Calu3 (cell line): ENCODE measurements at regions of chr2 and their contacts with region 1.

Region 1: DNA sequence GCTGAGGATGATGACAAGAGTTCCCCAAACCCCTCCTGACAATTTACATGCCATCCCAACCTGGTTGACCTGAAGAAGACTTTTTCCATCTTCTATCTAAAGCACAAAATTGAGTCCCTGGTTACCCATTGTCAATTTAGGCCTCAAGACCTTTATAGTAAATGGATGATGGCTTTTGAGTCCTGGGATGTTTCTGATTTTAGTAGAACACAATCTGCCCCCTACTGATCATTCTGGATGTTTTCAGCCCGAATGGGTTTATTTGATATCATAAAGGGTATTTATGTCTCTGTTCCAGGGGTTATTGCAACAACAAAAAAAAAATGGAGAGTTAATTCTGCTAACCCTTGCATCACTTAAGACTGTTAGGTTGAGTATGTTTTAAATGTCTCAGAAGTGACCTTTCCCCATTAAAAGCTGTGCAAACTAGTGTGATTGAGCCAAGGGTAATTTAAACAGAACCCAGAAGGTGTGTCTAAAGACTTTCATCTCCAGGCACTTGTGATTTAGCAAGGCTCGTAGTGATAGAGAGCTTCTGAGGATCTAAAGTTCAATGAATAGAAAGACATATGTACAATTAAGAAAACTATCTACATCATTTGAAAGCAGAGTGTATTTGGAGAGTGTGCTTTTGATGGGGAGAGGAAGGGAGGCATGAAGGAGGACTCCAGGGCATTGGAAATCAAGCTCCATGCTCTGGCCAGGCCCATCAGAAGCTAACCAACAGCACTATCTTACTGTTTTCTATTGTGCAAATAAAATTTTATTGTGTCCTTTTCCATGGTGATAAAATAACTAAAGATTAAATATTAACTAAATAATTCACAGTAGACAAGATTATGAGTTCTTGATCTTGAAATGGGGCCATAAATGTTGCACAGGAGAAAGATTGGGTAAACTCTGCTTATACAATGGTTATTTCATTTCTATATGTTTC is 96.6 kb upstream of the NOSTRIN start:
- DNase-seq: no peak
- H3K4me3 Mint-ChIP-seq: no peak overlapping the region
- H3K27ac Mint-ChIP-seq: no peak overlapping the region
- H3K4me1 Mint-ChIP-seq: peaks cover 17% of the 10 kb centered on the region
- H3K27me3 Mint-ChIP-seq: no peaks in the 10 kb centered on the region
- CTCF ChIP-seq: no peak

Region 2: GRCh38 chr2:168375195-168375798 is 330.5 kb before region 1 on chr2:
- CTCF ChIA-PET with region 1: no interaction called
- intact Hi-C with region 1: loop called (anchors 5 kb)
- DNase-seq: no peak
- H3K4me3 Mint-ChIP-seq: no peak overlapping the region
- H3K27ac Mint-ChIP-seq: no peak overlapping the region
- H3K4me1 Mint-ChIP-seq: no peaks in the 10 kb centered on the region
- H3K27me3 Mint-ChIP-seq: no peaks in the 10 kb centered on the region
- CTCF ChIP-seq: no peak